H1 (cell line): ENCODE measurements at regions of chr6 and their contacts with region 1.

Region 1: GRCh38 chr6:109455502-109456282 is at the start of gene MICAL1:
- DNase-seq: peak in 1 of 2 experiments; percentile 84
- H3K4me3 ChIP-seq: peak within 1 kb of the TSS; percentile 60 to 91 (median 84)
- H3K27ac ChIP-seq: no peak within 1 kb of the TSS
- H3K4me1 ChIP-seq: peaks cover 4 to 17% (median 11%) of the 10 kb centered on the region in 4 experiments
- H3K27me3 ChIP-seq: no peaks in the 10 kb centered on the region
- CTCF ChIP-seq: peak in 2 of 3 experiments; percentile 15 to 17; a peak in 2 of 4 replicates
- EP300 ChIP-seq: no peak
- POLR2A ChIP-seq: peak in 1 of 2 experiments; percentile 51; a peak in 1 of 3 replicates
- RAD21 ChIP-seq: no peak
- total RNA-seq, gene MICAL1: 51.3 and 55.4 TPM in 2 replicates

Region 2: GRCh38 chr6:109465772-109466171 is 10.1 kb after region 1 on chr6:
- CTCF ChIA-PET with region 1: interaction called, 3 read pairs
- POLR2A ChIA-PET with region 1: interaction called, 11 read pairs
- DNase-seq: no peak
- H3K4me3 ChIP-seq: no peak overlapping the region
- H3K27ac ChIP-seq: no peak overlapping the region
- H3K4me1 ChIP-seq: no peaks in the 10 kb centered on the region
- H3K27me3 ChIP-seq: no peaks in the 10 kb centered on the region
- CTCF ChIP-seq: no peak
- EP300 ChIP-seq: no peak
- POLR2A ChIP-seq: no peak
- RAD21 ChIP-seq: no peak